Calu3 (cell line): ENCODE measurements at regions of chr4 and their contacts with region 1.

Region 1: GRCh38 chr4:176377780-176378179 is 58.0 kb downstream of the SPCS3 start:
- DNase-seq: no peak
- H3K4me3 Mint-ChIP-seq: no peak overlapping the region
- H3K27ac Mint-ChIP-seq: no peak overlapping the region
- H3K4me1 Mint-ChIP-seq: no peaks in the 10 kb centered on the region
- H3K27me3 Mint-ChIP-seq: no peaks in the 10 kb centered on the region
- CTCF ChIP-seq: no peak

Region 2: GRCh38 chr4:176469546-176469945 is 91.8 kb after region 1 on chr4:
- CTCF ChIA-PET with region 1: no interaction called
- intact Hi-C with region 1: no loop called
- DNase-seq: no peak
- H3K4me3 Mint-ChIP-seq: no peak overlapping the region
- H3K27ac Mint-ChIP-seq: no peak overlapping the region
- H3K4me1 Mint-ChIP-seq: no peaks in the 10 kb centered on the region
- H3K27me3 Mint-ChIP-seq: no peaks in the 10 kb centered on the region
- CTCF ChIP-seq: no peak

Region 3: DNA sequence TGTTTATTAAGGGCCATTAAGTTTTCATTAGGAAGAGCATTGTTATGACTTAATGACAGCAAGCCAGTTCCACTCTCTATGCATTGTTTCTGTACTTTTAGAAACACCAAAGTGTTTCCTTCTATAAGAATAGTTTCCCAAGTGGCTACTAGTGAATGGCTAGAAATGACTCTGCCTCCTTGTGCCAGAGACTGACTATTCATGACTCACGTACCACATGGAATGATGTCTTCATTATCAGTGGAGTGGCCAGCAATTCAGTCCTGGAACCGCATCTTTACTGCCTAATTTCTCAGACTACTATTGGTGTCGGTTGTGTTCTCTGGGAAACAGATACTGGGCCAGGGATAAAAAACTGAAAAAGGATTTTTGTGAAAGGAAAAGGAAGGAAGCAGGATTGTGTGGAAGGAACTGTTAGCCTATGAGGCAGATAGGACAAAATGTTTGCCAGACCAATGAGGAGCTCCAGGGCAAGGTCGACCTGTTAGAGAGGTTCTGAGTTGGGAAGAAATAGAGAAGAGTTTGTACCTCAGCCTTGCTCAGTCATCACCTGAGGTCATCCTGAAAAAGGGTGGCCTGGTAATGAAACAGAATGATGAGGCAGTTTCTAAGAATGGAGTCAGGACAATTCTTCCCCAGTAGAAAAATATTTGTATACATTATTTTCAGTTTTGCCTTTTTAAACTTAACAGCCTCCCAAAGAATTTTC is 160.6 kb after region 1 on chr4:
- CTCF ChIA-PET with region 1: no interaction called
- intact Hi-C with region 1: loop called (anchors 5 kb)
- DNase-seq: no peak
- H3K4me3 Mint-ChIP-seq: no peak overlapping the region
- H3K27ac Mint-ChIP-seq: no peak overlapping the region
- H3K4me1 Mint-ChIP-seq: peaks cover 13% of the 10 kb centered on the region
- H3K27me3 Mint-ChIP-seq: no peaks in the 10 kb centered on the region
- CTCF ChIP-seq: no peak

Region 4: DNA sequence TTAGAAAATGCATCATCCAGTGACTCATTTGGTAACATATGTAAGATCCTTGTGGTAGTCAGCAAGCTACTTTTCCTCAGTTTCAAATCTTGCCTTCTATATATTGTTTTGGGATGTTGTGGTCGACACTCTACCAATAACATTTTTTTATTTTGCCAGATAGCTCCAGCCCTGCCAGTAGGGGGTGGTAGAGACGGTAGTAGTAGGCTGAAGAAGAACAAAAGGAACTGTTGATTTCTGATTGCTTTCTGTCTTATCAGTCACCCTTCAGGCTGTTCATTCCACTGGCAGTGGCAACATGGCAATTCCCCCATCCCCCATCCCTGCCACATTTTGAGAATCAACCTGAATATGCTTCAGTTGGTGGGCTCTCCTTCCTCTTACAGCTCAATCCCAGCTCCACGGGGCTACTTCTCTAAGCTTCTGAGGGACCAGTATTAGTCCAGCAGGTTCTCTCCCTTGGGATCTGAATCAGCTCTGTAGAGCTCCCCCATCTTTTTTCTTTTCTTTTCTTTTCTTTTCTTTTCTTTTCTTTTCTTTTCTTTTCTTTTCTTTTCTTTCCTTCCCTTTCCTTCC is 586.4 kb after region 1 on chr4:
- CTCF ChIA-PET with region 1: interaction called, 3 read pairs
- intact Hi-C with region 1: loop called (anchors 10 kb)
- DNase-seq: peak; percentile 52
- H3K4me3 Mint-ChIP-seq: no peak overlapping the region
- H3K27ac Mint-ChIP-seq: no peak overlapping the region
- H3K4me1 Mint-ChIP-seq: no peaks in the 10 kb centered on the region
- H3K27me3 Mint-ChIP-seq: no peaks in the 10 kb centered on the region
- CTCF ChIP-seq: peak; percentile 29

Region 5: DNA sequence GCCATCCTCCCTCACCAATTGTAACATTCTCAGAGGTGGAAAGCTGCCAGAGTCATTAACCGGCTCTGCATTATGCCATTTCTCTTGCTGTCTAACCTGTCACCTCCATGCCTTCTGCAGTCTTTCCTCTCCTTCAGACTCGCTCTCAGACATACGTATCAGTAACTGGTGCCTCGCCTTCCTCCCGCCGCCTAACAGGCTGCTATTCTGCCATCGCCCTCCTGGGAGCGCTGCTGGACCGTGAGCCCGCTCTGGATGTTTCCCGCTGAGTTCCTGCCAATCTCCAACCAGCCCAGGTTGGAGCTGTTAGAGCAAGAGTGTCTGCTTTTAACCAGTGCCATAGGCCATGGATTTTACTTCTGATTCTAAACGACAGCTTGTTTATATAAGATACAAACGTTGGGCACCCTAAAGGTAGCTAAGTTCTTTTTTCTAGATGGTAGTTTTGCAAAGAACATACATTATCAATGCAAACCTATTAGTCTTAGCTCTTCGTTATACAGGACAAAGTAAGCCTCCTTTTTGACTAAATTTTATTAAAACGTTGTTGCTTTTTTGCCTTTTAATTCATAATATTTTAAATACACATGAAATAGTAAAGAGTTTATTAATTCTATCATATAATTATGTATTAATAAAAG is 872.4 kb after region 1 on chr4:
- CTCF ChIA-PET with region 1: no interaction called
- intact Hi-C with region 1: loop called (anchors 1 kb)
- DNase-seq: peak; percentile 74
- H3K4me3 Mint-ChIP-seq: no peak overlapping the region
- H3K27ac Mint-ChIP-seq: no peak overlapping the region
- H3K4me1 Mint-ChIP-seq: peaks cover 8% of the 10 kb centered on the region
- H3K27me3 Mint-ChIP-seq: no peaks in the 10 kb centered on the region
- CTCF ChIP-seq: peak; percentile 76

Region 6: DNA sequence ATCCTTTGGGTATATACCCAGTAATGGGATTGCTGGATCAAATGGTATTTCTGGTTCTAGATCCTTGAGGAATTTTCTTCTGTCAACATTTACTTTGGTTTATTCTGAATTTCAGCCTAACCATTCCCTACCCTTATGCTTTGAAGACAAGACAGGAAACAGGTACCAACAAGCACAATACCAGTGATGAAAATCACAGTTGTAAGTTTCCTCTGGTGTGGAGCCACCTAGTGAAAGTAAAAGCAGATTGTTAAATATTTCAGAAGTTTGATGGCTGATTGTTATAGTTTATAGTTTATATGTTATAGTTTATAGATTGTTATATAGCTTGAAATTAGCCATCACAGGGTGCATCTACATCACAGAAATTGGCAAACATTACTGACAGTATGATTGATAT is 1169.0 kb after region 1 on chr4:
- CTCF ChIA-PET with region 1: no interaction called
- intact Hi-C with region 1: loop called (anchors 10 kb)
- DNase-seq: no peak
- H3K4me3 Mint-ChIP-seq: no peak overlapping the region
- H3K27ac Mint-ChIP-seq: no peak overlapping the region
- H3K4me1 Mint-ChIP-seq: no peaks in the 10 kb centered on the region
- H3K27me3 Mint-ChIP-seq: no peaks in the 10 kb centered on the region
- CTCF ChIP-seq: no peak